ENCODE measurements at regions of chr3 and their contacts with region 1.

Region 1: GRCh38 chr3:10344147-10344943 is 23.4 kb upstream of the SEC13 start:
- DNase-seq: peak in 8 of 10 donors; percentile 50 to 93 (median 64)

Region 2: DNA sequence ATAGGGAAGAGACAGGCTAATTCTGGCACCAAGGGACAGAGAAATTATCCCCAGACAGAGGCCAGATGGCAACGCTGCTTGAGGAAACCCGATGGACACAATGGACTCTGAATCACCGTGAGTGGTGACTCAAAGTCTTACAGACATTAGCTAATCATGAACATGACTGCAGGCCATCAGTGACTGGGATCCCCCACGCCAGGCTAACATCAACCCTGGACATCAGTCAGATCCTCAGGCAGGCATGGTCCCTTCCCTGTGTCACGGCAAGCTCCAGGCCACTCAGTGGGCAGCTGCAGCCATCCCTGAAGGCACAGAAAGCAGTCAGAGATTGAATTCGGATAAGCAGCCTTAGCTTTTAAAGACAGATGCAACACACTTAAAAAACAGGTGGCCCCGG is 1551.1 kb before region 1 on chr3:
- intact Hi-C with region 1: no loop called
- DNase-seq: no peak

Region 3: DNA sequence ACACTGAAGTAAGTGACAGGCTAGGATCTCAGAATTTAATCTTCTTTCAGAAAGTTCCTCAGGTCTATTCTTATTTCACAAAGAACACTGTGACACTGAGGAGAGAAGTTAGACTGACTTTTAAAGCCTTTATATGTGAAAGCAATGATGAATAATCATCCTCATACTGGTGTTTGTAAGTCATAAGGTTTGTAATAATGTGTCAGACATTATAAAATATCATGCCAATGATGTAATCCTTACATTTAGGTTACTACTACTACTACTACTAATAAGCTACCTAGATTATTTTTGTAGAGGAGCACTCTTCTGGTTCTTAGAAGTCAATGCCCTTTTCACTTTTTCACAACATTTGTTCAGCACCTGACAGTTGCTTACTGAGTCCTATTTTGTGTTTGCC is 269.7 kb before region 1 on chr3:
- intact Hi-C with region 1: no loop called
- DNase-seq: no peak

Region 4: GRCh38 chr3:10697918-10698317 is 353.6 kb after region 1 on chr3:
- intact Hi-C with region 1: loop called (anchors 5 kb)
- DNase-seq: no peak

Region 5: DNA sequence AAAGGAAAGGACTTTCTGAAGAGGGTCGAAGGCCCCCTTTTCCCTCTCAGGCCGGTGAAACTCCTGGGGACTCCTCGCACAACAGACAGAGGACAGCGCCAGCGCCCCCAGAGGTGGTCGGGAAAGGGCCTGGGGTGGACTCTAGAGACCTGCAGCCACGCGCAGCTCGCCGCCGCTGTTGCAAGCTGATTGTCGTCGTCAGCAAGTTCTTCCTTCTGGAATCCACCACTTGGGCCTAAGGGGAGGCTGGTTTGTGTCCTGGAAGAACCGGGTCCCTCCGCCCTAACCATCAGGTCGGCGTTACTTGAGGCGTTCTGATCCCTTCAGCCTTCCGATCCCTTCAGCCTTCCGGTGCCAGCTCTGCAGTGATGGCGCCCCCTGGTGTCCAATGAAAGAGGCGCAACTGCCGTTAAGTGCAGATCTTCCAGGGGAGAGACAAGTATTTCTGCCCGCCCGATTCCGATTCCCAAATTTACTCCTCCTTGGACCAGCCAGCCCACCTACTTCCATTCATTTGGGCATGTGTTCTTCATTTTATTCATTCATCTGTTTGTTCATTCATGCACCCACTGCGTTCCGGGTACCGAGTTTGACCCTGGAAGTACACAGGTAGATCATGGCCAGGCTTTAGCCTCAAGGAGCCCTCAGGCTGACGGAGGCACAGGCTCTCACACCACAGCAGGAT is 394.5 kb after region 1 on chr3:
- intact Hi-C with region 1: loop called (anchors 2 kb)
- DNase-seq: peak; percentile 60 to 97 (median 84)